ENCODE measurements at regions of chr2 and their contacts with region 1.

Region 1: GRCh38 chr2:178280244-178280852 is 86.0 kb downstream of the OSBPL6 start:
- DNase-seq: no peak
- H3K4me3 ChIP-seq: no peak overlapping the region
- H3K27me3 ChIP-seq: no peaks in the 10 kb centered on the region
- CTCF ChIP-seq: peak; percentile 64

Region 2: GRCh38 chr2:178266445-178266844 is 13.9 kb before region 1 on chr2:
- CTCF ChIA-PET with region 1: interaction called, 11 read pairs
- POLR2A ChIA-PET with region 1: no interaction called
- DNase-seq: no peak
- H3K4me3 ChIP-seq: no peak overlapping the region
- H3K27me3 ChIP-seq: no peaks in the 10 kb centered on the region
- CTCF ChIP-seq: no peak

Measured in BJ (cell line).